Ascending aorta (tissue), 2 donors: ENCODE measurements at regions of chr18 and their contacts with region 1.

Region 1: DNA sequence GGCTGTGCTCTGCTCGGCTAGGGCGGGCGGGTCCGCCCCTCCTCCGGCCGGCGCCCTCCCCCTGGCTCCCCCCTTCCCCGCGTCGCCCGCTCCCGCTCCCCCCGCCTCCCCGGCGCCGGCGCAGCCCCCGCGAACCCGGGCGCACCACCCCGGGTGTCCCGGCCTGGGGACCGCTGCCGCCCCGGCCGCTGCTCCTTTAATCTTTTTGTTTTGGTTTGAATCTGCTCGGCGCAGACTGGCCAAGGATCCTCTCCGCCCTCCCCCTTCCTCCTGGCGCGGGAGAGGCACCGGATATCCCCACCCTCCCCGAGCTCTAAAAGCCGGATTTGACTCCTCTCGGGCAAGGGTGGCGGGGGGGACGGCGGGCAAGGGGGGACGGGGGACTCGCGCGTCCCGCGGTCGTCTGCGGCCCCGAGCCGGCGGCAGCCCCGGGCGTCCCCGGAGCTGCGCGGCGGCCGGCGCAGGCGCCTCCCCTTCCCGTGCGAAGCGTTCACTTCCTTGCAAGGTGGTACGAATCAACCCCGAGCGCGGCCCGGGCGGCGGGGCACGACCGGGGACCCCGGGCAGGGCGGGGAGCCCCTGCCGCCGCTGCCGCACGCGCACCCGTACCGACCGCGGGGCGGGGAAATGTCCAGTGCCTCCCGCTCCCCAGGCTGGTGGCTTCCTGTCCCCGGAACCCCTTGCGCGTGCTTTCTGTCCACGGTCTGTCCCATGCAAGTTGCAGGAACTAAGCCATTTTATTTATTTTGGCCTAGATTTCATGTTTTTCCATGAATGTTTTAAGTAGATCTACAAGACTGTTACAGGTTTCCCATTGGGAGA is at the start of gene PTGR3:
- DNase-seq: peak; percentile 66 to 91
- H3K4me3 ChIP-seq: peak within 1 kb of the TSS; percentile 92 to 93
- H3K27ac ChIP-seq: peak within 1 kb of the TSS; percentile 96 to 97
- H3K4me1 ChIP-seq: peaks cover under 1 to 35% of the 10 kb centered on the region in 2 donors
- H3K27me3 ChIP-seq: no peaks in the 10 kb centered on the region
- CTCF ChIP-seq: no peak
- total RNA-seq, gene PTGR3: 10.1 TPM

Region 2: DNA sequence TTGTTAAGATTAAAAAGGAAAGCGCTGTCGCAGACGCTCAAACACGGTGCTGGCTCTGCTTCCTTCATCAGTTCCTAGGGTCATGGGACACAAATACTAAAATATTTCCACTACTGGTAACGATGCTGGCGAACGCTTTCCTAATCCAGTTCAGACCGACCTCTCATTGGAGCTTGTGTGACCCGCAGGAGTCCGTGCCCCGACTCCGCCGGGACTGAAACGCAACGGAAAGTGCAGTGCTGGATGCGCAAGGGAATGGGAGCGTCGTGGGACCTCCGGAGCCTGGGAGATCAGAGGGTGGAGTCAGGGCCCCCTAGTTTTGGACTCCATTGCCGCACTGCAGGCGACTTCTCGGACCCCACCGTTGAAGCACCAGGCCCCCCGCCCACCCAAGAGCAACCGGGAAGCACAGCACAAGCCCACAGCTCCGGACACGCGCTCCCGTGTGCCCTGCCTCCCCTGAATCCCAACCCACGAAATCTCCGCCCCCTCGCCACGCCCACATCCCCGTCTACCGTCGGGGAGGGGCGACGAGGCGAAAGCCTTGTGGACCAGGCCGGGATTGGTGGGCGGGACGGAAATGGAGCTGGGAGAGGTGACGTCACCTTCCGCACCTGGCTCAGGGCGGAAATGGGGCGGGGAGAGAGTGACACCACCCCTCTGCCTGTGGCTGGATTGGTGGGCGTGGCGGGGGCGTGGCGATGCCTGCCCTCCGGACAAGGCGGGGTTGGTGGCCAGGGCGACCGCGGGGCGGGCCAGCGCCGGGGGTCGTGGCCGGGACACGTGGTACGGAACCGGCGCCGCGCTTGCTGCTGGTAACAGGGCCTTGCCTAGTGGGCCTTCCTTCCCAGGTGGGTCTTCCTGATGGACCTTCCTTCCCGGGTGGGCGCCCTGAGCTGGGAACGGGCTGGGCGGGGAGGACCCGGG is 713.5 kb before region 1 on chr18 and contains the start of gene CNDP2:
- intact Hi-C with region 1: loop called (anchors 2 kb)
- DNase-seq: peak; percentile 98 to 100
- H3K4me3 ChIP-seq: peak within 1 kb of the TSS; percentile 75 to 87
- H3K27ac ChIP-seq: peak within 1 kb of the TSS; percentile 88 to 97
- H3K4me1 ChIP-seq: peaks cover 0 to 9% of the 10 kb centered on the region in 2 donors
- H3K27me3 ChIP-seq: no peaks in the 10 kb centered on the region
- CTCF ChIP-seq: no peak
- total RNA-seq, gene CNDP2: 33.5 TPM

Region 3: GRCh38 chr18:74806700-74807416 is 402.5 kb before region 1 on chr18:
- intact Hi-C with region 1: loop called (anchors 5 kb)
- DNase-seq: no peak
- H3K4me3 ChIP-seq: no peak overlapping the region
- H3K27ac ChIP-seq: no peak overlapping the region
- H3K4me1 ChIP-seq: no peaks in the 10 kb centered on the region
- H3K27me3 ChIP-seq: no peaks in the 10 kb centered on the region
- CTCF ChIP-seq: no peak

Region 4: DNA sequence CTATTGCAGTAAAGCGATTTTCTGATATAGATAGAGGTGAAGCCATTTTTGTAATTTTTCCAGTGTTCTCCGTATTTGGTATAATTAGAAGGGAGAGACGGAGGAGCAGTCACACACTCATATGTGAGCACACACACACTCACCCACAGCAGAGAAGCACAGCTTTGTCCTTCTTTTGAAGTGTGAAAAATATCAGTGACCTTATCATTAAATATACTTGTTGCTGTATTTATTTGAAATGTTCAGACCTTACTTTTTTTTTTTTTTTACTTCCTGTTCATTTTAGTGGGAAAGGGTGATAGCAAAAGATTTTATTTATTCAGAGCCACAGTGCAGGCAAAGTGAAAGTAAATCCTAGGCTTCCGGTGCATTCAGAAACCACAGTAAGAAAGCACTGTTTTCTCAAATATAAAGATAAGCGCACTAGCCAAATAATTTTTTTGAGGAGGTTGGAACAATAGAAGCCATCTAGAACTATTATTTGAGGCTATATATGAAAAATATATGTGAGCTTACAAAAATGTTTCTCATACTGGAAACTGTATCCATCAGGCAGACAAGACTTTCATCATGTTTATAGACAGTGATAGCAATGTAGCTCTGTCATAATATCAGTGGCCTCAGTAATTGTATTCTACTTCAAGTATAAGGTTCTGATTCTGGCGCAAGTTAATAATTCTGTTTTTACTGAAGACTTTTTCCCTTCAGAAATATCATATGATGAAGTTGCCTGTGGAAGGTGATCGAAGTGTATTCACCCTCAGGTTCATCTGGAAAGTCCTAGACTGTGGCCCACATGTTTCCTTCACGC is 38.5 kb after region 1 on chr18:
- intact Hi-C with region 1: loop called (anchors 2 kb)
- DNase-seq: no peak
- H3K4me3 ChIP-seq: peak overlapping the region; percentile 57 to 62
- H3K27ac ChIP-seq: peak overlapping the region; percentile 54 to 76
- H3K4me1 ChIP-seq: peaks cover 0 to 10% of the 10 kb centered on the region in 2 donors
- H3K27me3 ChIP-seq: no peaks in the 10 kb centered on the region
- CTCF ChIP-seq: no peak

Region 5: GRCh38 chr18:76492669-76493212 is 1283.4 kb after region 1 on chr18:
- intact Hi-C with region 1: loop called (anchors 10 kb)
- DNase-seq: peak; percentile 95 to 99
- H3K4me3 ChIP-seq: peak overlapping the region; percentile 67 to 78
- H3K27ac ChIP-seq: peak overlapping the region; percentile 67 to 72
- H3K4me1 ChIP-seq: peaks cover 6 to 7% of the 10 kb centered on the region in 2 donors
- H3K27me3 ChIP-seq: no peaks in the 10 kb centered on the region
- CTCF ChIP-seq: no peak